Heart right ventricle (tissue), 16 donors: ENCODE measurements at regions of chr5 and their contacts with region 1.

Region 1: GRCh38 chr5:139810341-139811273 is 15.0 kb downstream of the PSD2 start:
- DNase-seq: no peak
- ATAC-seq: no peak
- H3K4me3 ChIP-seq: no peak overlapping the region
- H3K27ac ChIP-seq: no peak overlapping the region
- H3K4me1 ChIP-seq: no peaks in the 10 kb centered on the region
- H3K27me3 ChIP-seq: peaks cover 0 to 11% (median 0%) of the 10 kb centered on the region in 7 donors
- CTCF ChIP-seq: no peak

Region 2: GRCh38 chr5:139341650-139342422 is 468.8 kb before region 1 on chr5 and contains the start of gene PAIP2:
- intact Hi-C with region 1: no loop called
- DNase-seq: peak; percentile 98
- ATAC-seq: peak; percentile 97 to 99 (median 98)
- H3K4me3 ChIP-seq: peak within 1 kb of the TSS; percentile 69 to 97 (median 84)
- H3K27ac ChIP-seq: peak within 1 kb of the TSS; percentile 92 to 99 (median 98)
- H3K4me1 ChIP-seq: peaks cover 0 to 40% (median 31%) of the 10 kb centered on the region in 9 donors
- H3K27me3 ChIP-seq: no peaks in the 10 kb centered on the region
- CTCF ChIP-seq: peak; percentile 43 to 93 (median 76)
- total RNA-seq, gene PAIP2: 126 to 173 (median 139) TPM

Region 3: DNA sequence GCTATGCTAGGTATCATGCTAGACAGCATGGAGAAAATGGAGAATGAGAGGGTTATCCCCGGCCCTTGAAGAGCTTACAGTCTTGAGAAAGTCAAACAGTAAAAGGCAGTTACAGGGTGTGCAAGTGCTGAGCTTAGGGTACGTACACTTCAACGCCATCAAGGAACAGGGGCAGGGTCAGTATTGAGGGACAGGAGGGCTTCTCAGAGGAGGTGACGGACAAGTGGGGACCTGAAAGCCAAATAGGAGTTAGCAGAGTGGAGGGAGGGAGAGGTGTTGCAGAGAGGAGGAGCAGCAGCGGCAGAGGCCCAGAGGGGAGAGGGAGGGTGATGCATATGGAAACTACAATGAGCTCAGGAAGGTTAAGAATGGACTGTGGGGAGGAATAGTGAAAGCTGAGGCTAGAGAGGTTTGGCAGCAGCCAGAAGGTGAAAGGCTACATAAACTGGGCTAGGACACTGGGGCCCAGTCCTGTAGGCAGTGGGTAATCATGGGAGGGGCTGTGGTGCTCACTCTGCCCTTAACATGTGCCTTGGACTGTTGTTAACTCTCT is 144.5 kb after region 1 on chr5:
- intact Hi-C with region 1: loop called in 1 of 10 experiments (anchors 5 kb)
- DNase-seq: no peak
- ATAC-seq: peak in 1 of 8 donors; percentile 13
- H3K4me3 ChIP-seq: no peak overlapping the region
- H3K27ac ChIP-seq: no peak overlapping the region
- H3K4me1 ChIP-seq: peaks cover 0 to 42% (median 16%) of the 10 kb centered on the region in 9 donors
- H3K27me3 ChIP-seq: no peaks in the 10 kb centered on the region
- CTCF ChIP-seq: no peak

Region 4: DNA sequence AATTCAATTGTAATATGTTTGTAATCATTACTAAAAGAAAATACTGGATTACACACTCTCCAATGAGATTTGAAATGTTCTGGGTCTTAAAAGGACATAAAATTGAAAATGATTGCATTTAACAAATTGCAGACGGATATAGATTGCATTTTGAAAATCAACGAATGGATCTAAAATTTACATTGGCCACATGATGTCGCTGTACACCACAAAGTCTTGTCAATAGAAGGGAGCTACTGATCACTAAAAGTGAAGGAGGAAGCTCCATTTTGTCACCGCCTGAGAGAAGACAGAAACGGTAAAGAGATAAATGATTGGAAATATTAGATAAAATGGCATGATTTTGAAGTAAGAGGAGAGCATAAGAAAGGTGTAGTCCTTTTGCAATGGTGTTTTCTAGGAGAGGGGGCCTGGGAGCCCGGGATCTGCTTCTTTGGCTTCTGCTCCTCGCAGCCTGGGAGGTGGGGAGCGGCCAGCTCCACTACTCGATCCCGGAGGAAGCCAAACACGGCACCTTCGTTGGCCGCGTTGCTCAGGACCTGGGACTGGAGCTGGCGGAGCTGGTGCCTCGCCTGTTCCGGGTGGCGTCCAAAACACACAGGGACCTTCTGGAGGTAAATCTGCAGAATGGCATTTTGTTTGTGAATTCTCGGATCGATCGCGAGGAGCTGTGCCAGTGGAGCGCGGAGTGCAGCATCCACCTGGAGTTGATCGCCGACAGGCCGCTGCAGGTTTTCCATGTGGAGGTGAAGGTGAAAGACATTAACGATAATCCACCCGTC is 975.5 kb after region 1 on chr5 and contains the start of gene PCDHA1:
- intact Hi-C with region 1: no loop called
- DNase-seq: no peak
- ATAC-seq: no peak
- H3K4me3 ChIP-seq: no peak within 1 kb of the TSS
- H3K27ac ChIP-seq: no peak within 1 kb of the TSS
- H3K4me1 ChIP-seq: no peaks in the 10 kb centered on the region
- H3K27me3 ChIP-seq: peaks cover 0 to 51% (median 31%) of the 10 kb centered on the region in 7 donors
- CTCF ChIP-seq: no peak
- total RNA-seq, gene PCDHA1: 0.09 TPM in 1 of 10 donors, not detected in the others